ENCODE measurements at regions of chr13 and their contacts with region 1.

Region 1: GRCh38 chr13:45851171-45851921 is at the start of gene SIAH3:
- DNase-seq: peak; percentile 23
- ATAC-seq: peak; percentile 44
- H3K4me3 Mint-ChIP-seq: peak within 1 kb of the TSS; percentile 73
- H3K27ac Mint-ChIP-seq: 0 out of 2 replicates have a peak within 1 kb of the TSS, but pooled peaks have one; percentile 26
- H3K4me1 Mint-ChIP-seq: peaks cover 59% of the 10 kb centered on the region
- H3K27me3 Mint-ChIP-seq: peaks cover 38% of the 10 kb centered on the region
- CTCF ChIP-seq: no peak
- total RNA-seq, gene SIAH3: 0.09 to 0.31 TPM (median 0.11 TPM) in 3 replicates

Region 2: GRCh38 chr13:45879670-45880069 is 28.3 kb after region 1 on chr13:
- CTCF ChIA-PET with region 1: interaction called, 12 read pairs
- POLR2A ChIA-PET with region 1: no interaction called
- DNase-seq: peak; percentile 50
- ATAC-seq: peak; percentile 77
- H3K4me3 Mint-ChIP-seq: no peak overlapping the region
- H3K27ac Mint-ChIP-seq: no peak overlapping the region
- H3K4me1 Mint-ChIP-seq: peaks cover 23% of the 10 kb centered on the region
- H3K27me3 Mint-ChIP-seq: peaks cover 76% of the 10 kb centered on the region
- CTCF ChIP-seq: no peak